ENCODE measurements at regions of chr11 and their contacts with region 1.

Region 1: GRCh38 chr11:2428322-2428795 is 16.0 kb downstream of the TRPM5 start:
- DNase-seq: peak; percentile 88
- ATAC-seq: peak; percentile 89
- H3K4me3 Mint-ChIP-seq: no peak overlapping the region
- H3K27ac Mint-ChIP-seq: no peak overlapping the region
- H3K4me1 Mint-ChIP-seq: no peaks in the 10 kb centered on the region
- H3K27me3 Mint-ChIP-seq: peaks cover 10% of the 10 kb centered on the region
- CTCF ChIP-seq: peak; percentile 76

Region 2: GRCh38 chr11:2526808-2527381 is 98.5 kb after region 1 on chr11:
- CTCF ChIA-PET with region 1: interaction called, 122 read pairs
- POLR2A ChIA-PET with region 1: no interaction called
- DNase-seq: peak; percentile 48
- ATAC-seq: peak; percentile 36
- H3K4me3 Mint-ChIP-seq: no peak overlapping the region
- H3K27ac Mint-ChIP-seq: peak overlapping the region; percentile 53; the same call in 1 of the 2 replicates
- H3K4me1 Mint-ChIP-seq: no peaks in the 10 kb centered on the region
- H3K27me3 Mint-ChIP-seq: peaks cover 39% of the 10 kb centered on the region
- CTCF ChIP-seq: no peak